ENCODE measurements at regions of chr16 and their contacts with region 1.

Region 1: GRCh38 chr16:73457851-73458250 is 409.9 kb upstream of the ZFHX3 start:
- DNase-seq: no peak
- H3K4me3 ChIP-seq: no peak overlapping the region
- H3K27ac ChIP-seq: no peak overlapping the region
- H3K4me1 ChIP-seq: no peaks in the 10 kb centered on the region
- H3K27me3 ChIP-seq: no peaks in the 10 kb centered on the region
- CTCF ChIP-seq: no peak

Region 2: DNA sequence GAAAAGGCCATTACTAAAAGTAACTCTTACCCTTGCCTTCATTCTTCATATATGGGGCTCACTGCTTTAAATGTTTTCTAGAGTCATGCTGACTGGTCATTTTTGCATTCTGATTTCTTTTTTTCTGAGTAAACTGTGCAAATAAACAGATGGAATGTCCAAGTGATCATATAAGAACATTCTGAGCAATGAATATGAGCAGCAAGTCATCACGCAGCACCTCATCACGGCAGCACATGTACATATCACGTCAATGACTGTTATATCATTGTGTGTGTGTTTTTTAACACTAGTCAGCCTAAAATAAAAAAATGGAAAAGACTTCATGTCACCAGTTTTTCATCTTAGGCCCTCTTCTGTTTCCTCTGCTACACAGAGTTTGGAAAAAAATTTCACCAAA is 80.1 kb after region 1 on chr16:
- intact Hi-C with region 1: no loop called
- DNase-seq: no peak
- H3K4me3 ChIP-seq: no peak overlapping the region
- H3K27ac ChIP-seq: no peak overlapping the region
- H3K4me1 ChIP-seq: no peaks in the 10 kb centered on the region
- H3K27me3 ChIP-seq: no peaks in the 10 kb centered on the region
- CTCF ChIP-seq: no peak

Region 3: GRCh38 chr16:73616166-73616753 is 158.4 kb after region 1 on chr16:
- intact Hi-C with region 1: no loop called
- DNase-seq: no peak
- H3K4me3 ChIP-seq: no peak overlapping the region
- H3K27ac ChIP-seq: no peak overlapping the region
- H3K4me1 ChIP-seq: no peaks in the 10 kb centered on the region
- H3K27me3 ChIP-seq: no peaks in the 10 kb centered on the region
- CTCF ChIP-seq: no peak

Region 4: DNA sequence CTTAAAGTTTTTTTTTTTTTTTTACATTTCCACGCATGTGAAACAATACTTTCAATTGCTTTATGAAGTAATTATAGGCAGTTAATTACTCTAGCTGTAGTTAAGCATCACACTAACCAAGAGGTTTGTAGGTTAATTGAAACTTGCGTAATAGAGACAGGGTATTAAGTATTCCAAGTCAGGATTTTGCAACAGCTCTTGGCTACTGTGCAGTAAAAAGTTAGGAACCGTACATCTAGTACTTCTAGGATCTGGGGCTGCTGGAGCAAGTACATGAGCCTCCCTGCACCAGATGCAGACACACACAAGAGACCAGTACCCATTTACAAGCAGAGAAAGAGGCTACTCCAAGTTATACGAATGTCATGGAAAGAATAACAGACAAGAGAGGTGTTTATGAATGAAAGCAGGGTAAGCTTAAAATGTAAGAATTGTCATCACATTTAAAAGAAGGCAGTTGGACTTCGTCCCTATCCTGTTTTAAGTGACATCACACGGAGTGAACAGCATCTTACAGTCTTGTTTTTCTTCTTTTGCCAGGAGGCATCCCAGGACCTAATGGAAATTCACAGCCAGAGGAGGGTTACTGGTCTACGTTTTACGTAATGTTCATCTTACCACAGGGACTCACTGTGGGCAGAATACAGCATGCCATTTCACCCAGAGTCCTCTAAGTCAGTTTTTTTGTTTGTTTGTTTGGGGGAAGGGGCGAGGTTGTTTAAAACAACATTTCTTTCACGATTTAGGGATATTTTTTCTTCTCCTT is 459.2 kb after region 1 on chr16:
- intact Hi-C with region 1: loop called (anchors 2 kb)
- DNase-seq: no peak
- H3K4me3 ChIP-seq: no peak overlapping the region
- H3K27ac ChIP-seq: no peak overlapping the region
- H3K4me1 ChIP-seq: peaks cover 0 to 5% (median 0%) of the 10 kb centered on the region in 4 donors
- H3K27me3 ChIP-seq: no peaks in the 10 kb centered on the region
- CTCF ChIP-seq: no peak

Measured in tibial artery (tissue), 4 donors.